ENCODE measurements at regions of chr5 and their contacts with region 1.

Region 1: DNA sequence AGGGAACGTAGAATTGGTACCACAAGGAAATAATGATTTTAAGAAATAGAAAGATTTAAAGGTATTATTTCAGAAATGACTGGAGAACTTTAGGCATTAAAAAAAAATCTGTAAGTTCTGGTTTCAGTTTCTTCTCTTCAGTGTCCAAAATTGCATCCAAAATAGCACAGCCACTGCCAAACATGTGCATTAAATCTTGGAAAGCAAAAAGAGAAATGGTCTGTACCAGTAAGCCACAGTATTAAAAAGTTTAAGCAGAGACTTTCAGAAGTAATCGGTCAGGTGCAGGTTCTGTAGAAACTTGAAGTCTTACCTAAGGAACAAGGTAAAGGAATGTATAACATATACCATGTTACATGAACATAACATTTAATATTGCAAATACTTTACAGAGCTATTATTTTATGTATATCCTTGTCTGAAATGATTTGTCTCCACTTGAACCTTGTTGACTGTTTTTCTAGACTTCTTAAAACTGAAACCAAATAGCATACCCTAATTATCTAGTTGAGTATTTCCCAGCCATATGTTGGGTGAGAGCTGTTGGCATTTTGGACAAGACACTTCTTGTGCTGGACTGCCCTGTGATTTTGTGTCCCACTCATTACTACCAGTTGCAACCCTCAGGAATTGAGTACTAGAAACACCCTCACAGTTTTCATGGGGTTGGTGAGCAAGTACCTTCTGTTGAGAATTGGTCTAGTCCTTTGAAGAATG is 32.1 kb downstream of the NIPBL start:
- DNase-seq: no peak
- ATAC-seq: no peak
- H3K4me3 Mint-ChIP-seq: no peak overlapping the region
- H3K27ac Mint-ChIP-seq: no peak overlapping the region
- H3K4me1 Mint-ChIP-seq: peaks cover 52% of the 10 kb centered on the region
- H3K27me3 Mint-ChIP-seq: no peaks in the 10 kb centered on the region
- CTCF ChIP-seq: no peak

Region 2: DNA sequence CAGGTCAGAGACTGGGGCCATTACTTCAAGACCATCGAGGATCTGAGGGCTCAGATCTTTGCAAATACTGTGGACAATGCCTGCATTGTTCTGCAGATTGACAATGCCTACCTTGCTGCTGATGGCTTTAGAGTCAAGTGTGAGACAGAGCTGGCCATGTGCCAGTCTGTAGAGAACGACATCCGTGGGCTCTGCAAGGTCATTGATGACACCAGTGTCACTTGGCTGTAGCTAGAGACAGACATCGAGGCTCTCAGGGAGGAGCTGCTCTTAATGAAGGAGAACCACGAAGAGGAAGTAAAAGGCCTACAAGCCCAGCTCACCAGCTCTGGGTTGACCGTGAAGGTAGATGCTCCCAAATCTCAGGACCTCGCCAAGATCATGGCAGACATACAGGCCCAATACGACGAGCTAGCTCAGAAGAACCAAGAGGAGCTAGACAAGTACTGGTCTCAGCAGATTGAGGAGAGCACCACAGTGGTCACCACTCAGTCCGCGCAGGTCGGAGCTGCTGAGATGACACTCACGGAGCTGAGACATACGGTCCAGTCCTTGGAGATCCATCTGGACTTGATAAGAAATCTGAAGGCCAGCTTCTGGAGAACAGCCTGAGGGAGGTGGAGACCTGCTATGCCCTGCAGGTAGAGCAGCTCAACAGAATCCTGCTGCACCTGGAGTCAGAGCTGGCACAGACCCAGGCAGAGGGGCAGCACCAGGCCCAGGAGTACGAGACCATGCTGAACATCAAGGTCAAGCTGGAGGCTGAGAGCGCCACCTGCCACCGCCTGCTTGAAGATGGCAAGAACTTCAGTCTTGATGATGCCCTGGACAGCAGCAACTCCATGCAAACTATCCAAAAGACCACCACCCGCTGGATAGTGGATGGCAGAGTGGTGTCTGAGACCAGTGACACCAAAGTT is 22.9 kb before region 1 on chr5:
- CTCF ChIA-PET with region 1: no interaction called
- POLR2A ChIA-PET with region 1: no interaction called
- intact Hi-C with region 1: loop called (anchors 2 kb)
- DNase-seq: no peak
- ATAC-seq: no peak
- H3K4me3 Mint-ChIP-seq: peak overlapping the region; percentile 41
- H3K27ac Mint-ChIP-seq: no peak overlapping the region
- H3K4me1 Mint-ChIP-seq: peaks cover 71% of the 10 kb centered on the region
- H3K27me3 Mint-ChIP-seq: no peaks in the 10 kb centered on the region
- CTCF ChIP-seq: no peak

Region 3: GRCh38 chr5:36891266-36891665 is 17.4 kb before region 1 on chr5:
- CTCF ChIA-PET with region 1: no interaction called
- POLR2A ChIA-PET with region 1: interaction called, 3 read pairs
- intact Hi-C with region 1: loop called (anchors 2 kb)
- DNase-seq: no peak
- ATAC-seq: no peak
- H3K4me3 Mint-ChIP-seq: no peak overlapping the region
- H3K27ac Mint-ChIP-seq: no peak overlapping the region
- H3K4me1 Mint-ChIP-seq: peaks cover 70% of the 10 kb centered on the region
- H3K27me3 Mint-ChIP-seq: no peaks in the 10 kb centered on the region
- CTCF ChIP-seq: no peak

Region 4: GRCh38 chr5:36934740-36935356 is 26.1 kb after region 1 on chr5:
- CTCF ChIA-PET with region 1: no interaction called
- POLR2A ChIA-PET with region 1: no interaction called
- intact Hi-C with region 1: loop called (anchors 2 kb)
- DNase-seq: no peak
- ATAC-seq: no peak
- H3K4me3 Mint-ChIP-seq: no peak overlapping the region
- H3K27ac Mint-ChIP-seq: no peak overlapping the region
- H3K4me1 Mint-ChIP-seq: peaks cover 62% of the 10 kb centered on the region
- H3K27me3 Mint-ChIP-seq: no peaks in the 10 kb centered on the region
- CTCF ChIP-seq: no peak

Region 5: DNA sequence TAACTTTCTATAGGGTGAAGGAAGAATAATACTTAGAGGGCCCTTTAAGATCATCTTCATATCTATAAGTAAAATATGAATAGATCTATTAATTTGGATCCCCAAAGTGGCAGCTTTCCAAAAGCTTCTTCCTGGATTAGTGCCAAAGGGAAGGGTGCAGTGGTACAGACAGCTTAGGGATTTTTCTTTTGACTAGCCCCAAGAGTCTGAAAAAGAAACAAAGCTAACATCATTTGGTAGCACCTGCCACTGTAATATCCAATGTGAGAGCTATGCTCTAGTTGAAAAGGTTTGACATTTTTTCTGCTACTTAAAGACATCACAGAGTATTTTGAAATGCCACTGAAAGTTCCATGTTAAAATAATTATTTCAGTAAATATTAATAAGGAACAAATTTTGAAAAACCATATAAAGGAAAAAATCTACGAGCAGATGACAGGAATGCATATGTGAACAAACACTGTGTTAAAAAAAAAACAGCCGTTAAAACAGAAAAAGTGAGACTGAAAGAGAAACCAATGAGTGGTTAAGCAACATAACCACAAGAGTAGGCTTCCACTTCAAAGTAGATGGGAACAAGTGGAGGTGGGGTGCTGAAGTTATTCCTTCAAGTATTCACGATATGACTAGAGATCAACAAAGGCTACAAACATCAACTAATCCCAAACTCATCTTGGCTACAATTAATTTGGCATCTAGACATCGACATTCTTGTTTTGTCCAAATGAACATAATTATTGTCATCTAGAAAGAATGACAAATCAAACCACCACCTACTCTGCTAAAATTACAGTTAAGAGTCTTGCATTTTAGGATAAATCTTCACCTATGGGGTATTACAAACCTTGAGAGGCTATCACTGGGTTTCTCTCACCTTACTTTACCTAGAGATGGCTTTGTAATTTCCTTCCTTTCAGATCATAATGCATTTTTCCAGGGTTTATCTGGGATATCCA is 203.0 kb after region 1 on chr5:
- CTCF ChIA-PET with region 1: no interaction called
- POLR2A ChIA-PET with region 1: no interaction called
- intact Hi-C with region 1: no loop called
- DNase-seq: no peak
- ATAC-seq: no peak
- H3K4me3 Mint-ChIP-seq: no peak overlapping the region
- H3K27ac Mint-ChIP-seq: no peak overlapping the region
- H3K4me1 Mint-ChIP-seq: peaks cover 12% of the 10 kb centered on the region
- H3K27me3 Mint-ChIP-seq: no peaks in the 10 kb centered on the region
- CTCF ChIP-seq: no peak

Measured in activated B cell treated with CpG ODN at 0.5 μM for 24 hours (primary cell).